ENCODE measurements at regions of chr2 and their contacts with region 1.

Region 1: DNA sequence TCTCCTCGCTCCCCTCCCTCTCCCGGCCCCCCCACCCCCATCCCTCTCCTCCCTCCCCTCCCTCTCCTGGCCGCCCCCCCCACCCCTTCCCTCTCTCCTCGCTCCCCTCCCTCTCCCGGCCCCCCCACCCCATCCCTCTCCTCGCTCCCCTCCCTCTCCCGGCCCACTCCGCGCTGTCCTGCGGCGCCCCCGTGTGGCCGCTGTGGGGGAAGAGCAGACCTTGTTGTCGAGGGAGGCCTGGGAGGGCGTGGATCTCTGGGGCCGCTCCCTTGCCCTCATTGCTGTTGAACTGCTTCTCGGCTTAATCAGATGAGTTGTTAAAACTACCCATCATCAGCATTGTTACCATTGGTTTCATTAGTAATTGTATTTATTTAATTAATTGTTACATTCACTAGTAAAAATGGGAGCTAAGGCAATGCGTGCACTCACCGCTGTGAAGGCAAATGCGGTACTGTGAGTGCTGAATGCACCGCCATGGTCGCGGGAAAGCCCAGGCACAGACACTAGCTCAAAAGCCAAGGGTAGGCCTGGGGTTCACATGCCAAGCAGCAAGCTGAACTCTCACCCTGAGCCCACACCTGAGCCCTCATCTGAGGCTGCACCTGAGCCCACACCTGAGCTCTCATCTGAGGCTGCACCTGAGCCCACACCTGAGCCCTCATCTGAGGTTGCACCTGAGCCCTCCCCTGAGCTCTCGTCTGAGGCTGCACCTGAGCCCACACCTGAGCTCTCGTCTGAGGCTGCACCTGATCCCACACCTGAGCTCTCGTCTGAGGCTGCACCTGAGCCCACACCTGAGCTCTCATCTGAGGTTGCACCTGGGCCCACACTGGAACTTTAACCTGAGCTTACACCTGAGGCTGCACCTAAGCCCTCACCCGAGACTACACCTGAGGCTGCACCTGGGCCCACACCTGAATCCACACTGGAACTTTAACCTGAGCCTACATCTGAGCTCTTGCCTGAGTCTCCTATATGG is 8.8 kb downstream of the RTP5 start:
- DNase-seq: peak; percentile 80
- H3K4me3 Mint-ChIP-seq: no peak overlapping the region
- H3K27ac Mint-ChIP-seq: no peak overlapping the region
- H3K4me1 Mint-ChIP-seq: peaks cover 24% of the 10 kb centered on the region
- H3K27me3 Mint-ChIP-seq: no peaks in the 10 kb centered on the region

Region 2: DNA sequence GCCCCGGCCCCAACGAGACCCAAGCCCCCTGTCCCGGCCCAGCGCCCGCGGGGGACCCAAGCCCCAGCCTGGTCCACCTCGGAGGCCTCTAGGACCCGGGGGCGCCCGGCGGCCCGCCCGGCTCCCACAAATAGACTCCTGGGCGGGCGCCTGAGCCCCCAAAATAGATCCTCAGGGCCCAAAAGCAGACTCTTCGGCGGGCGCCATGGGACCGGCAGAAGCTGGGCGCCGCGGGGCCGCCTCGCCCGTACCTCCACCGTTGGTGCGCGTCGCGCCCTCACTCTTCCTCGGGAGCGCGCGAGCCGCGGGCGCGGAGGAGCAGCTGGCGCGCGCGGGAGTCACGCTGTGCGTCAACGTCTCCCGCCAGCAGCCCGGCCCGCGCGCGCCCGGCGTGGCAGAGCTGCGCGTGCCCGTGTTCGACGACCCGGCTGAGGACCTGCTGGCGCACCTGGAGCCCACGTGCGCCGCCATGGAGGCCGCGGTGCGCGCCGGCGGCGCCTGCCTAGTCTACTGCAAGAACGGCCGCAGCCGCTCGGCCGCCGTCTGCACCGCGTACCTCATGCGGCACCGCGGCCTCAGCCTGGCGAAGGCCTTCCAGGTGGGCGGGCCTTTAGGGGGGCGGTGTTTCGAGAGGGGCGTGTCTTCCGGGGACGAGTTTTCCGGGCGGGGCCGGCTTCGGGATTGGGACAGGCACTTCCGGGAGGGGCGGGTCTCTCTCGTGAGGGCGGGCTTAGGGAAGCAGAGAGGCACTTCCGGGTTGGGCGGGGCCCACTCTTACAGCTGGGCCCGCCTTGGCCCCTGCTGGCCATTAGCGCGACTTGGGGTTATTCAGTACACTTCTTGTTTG is 1317.6 kb before region 1 on chr2:
- CTCF ChIA-PET with region 1: no interaction called
- intact Hi-C with region 1: loop called (anchors 10 kb)
- DNase-seq: peak; percentile 100
- H3K4me3 Mint-ChIP-seq: peak overlapping the region; percentile 94
- H3K27ac Mint-ChIP-seq: peak overlapping the region; percentile 99
- H3K4me1 Mint-ChIP-seq: peaks cover 69% of the 10 kb centered on the region
- H3K27me3 Mint-ChIP-seq: no peaks in the 10 kb centered on the region

Region 3: DNA sequence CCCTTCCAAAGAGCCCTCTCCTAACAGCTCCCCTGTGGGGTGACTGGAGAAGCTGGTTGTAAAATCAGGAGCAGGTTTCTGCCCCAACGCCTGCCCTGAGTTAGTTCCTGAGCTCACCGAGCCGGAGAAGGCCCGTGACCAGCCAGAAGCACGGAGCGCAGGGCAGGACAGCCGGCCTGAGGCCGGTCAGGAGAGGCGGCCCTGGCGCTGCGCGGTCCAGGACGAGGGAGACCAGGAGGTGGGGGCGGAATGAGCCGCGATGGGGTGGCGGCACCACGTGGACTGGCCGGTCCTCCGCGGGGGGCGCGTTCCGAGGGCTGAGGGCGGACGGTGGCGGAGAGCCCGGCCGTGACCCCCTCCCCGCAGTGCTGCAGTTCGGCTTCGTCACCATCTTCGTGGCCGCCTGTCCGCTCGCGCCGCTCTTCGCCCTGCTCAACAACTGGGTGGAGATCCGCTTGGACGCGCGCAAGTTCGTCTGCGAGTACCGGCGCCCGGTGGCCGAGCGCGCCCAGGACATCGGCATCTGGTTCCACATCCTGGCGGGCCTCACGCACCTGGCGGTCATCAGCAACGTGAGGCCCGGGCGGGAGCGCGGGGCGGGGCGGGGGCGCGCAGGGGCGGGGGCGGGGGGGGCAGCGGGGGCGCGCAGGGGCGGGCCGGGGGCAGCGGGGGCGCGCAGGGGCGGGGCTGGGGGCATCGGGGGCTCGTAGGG is 660.8 kb before region 1 on chr2:
- CTCF ChIA-PET with region 1: no interaction called
- intact Hi-C with region 1: loop called (anchors 2 kb)
- DNase-seq: peak; percentile 17
- H3K4me3 Mint-ChIP-seq: peak overlapping the region; percentile 61
- H3K27ac Mint-ChIP-seq: no peak overlapping the region
- H3K4me1 Mint-ChIP-seq: peaks cover 8% of the 10 kb centered on the region
- H3K27me3 Mint-ChIP-seq: peaks cover 9% of the 10 kb centered on the region

Region 4: GRCh38 chr2:241508240-241509154 is 369.8 kb before region 1 on chr2 and contains the start of gene STK25:
- CTCF ChIA-PET with region 1: no interaction called
- intact Hi-C with region 1: loop called (anchors 1 kb)
- DNase-seq: peak; percentile 98
- H3K4me3 Mint-ChIP-seq: peak within 1 kb of the TSS; percentile 79
- H3K27ac Mint-ChIP-seq: no peak within 1 kb of the TSS
- H3K4me1 Mint-ChIP-seq: peaks cover 21% of the 10 kb centered on the region
- H3K27me3 Mint-ChIP-seq: no peaks in the 10 kb centered on the region
- total RNA-seq, gene STK25: 81.2 to 88.4 TPM

Region 5: DNA sequence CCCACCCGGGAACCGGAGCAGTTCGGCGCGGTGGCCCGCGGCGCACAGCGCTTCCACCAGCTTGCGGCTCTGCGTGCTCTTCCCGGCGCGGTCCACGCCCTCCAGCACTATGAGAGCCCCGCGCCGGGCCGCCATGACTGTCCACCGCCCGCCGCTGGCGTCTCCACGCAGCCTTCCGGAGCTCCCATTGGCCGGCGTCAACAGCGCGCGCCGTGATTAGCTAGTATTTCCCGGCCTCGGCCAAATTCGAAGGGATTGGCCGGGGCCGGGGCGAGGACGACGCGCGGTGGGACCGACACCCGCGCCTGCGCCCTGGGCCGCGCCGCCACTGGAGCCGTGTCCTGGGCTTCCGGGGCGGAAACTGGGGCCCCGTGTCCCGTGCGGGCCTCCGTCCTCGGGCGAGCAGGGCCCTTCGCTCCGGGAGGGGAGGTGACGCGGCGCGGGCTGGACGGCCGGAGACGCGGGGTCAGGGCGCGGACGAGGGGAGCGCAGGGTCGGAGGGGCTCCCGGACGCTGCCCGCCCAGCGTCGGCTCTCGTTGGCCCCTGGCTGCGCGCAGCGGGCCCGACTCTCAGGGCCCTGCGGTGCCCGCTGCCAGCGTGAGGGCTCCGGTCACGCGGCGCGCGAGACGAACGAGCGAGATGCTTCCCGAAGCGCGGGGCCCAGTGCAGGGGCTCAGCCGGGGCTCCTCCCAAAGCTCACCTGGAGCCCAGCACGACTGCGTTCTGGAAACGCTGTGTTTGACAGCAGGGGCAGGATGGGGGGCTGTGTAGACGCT is 191.4 kb before region 1 on chr2 and contains the start of gene DTYMK:
- CTCF ChIA-PET with region 1: interaction called, 5 read pairs
- intact Hi-C with region 1: loop called (anchors 1 kb)
- DNase-seq: peak; percentile 97
- H3K4me3 Mint-ChIP-seq: peak within 1 kb of the TSS; percentile 99
- H3K27ac Mint-ChIP-seq: peak within 1 kb of the TSS; percentile 94
- H3K4me1 Mint-ChIP-seq: peaks cover 39% of the 10 kb centered on the region
- H3K27me3 Mint-ChIP-seq: no peaks in the 10 kb centered on the region
- total RNA-seq, gene DTYMK: 88.0 to 93.8 TPM

Region 6: GRCh38 chr2:241734467-241735208 is 143.6 kb before region 1 on chr2 and contains the start of gene D2HGDH:
- CTCF ChIA-PET with region 1: interaction called, 11 read pairs
- intact Hi-C with region 1: loop called (anchors 1 kb)
- DNase-seq: peak; percentile 95
- H3K4me3 Mint-ChIP-seq: peak within 1 kb of the TSS; percentile 78
- H3K27ac Mint-ChIP-seq: no peak within 1 kb of the TSS
- H3K4me1 Mint-ChIP-seq: peaks cover 52% of the 10 kb centered on the region
- H3K27me3 Mint-ChIP-seq: no peaks in the 10 kb centered on the region
- total RNA-seq, gene D2HGDH: 19.4 to 23.1 TPM

Region 7: DNA sequence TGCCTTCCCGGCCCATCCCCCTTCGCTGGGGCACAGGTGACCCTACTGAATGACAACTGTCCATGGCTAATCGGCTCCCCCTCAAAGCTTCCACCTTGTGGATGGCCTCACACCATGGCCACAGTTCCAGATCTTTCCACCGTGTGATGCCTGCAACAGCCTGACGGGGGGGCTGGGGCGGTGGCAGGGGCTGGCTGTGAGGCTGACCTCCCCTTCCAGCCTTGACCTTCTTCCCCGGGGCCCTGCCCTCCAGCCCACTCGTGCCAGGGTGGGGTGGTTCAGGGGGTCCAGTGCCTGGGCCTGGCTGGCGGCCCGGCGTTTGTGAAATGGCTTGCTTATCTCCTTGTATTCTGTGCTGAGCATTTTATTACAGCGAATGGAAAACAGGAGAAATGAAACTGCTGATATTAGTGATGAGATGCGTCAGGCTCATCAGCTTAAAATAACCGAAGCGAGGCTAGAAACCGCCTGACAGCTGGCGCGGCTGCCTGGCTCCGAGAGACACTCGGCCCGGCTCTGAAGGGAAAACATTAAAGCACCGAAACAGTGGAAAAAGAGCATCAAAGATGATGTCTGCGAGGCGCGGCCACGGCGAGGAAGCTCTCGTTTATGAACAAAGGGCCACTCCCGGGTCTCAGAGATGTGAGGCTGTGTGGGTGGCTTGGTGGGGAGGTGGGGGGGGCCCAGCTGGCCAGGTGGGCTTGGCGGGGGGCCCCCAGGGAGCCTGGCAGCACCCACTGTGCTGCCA is 18.7 kb before region 1 on chr2:
- CTCF ChIA-PET with region 1: interaction called, 5 read pairs
- intact Hi-C with region 1: loop called (anchors 1 kb)
- DNase-seq: peak; percentile 86
- H3K4me3 Mint-ChIP-seq: peak overlapping the region; percentile 76
- H3K27ac Mint-ChIP-seq: peak overlapping the region; percentile 95
- H3K4me1 Mint-ChIP-seq: peaks cover 69% of the 10 kb centered on the region
- H3K27me3 Mint-ChIP-seq: peaks cover 11% of the 10 kb centered on the region

Measured in activated naive CD4-positive, alpha-beta T cell treated with anti-CD3 and anti-CD28 coated beads for 36 hours (primary cell).